GM10248 (cell line): ENCODE measurements at regions of chr19 and their contacts with region 1.

Region 1: GRCh38 chr19:2032296-2032941 is 16.9 kb upstream of the BTBD2 start:
- DNase-seq: no peak
- CTCF ChIP-seq: no peak

Region 2: GRCh38 chr19:2021453-2022140 is 10.8 kb before region 1 on chr19:
- CTCF ChIA-PET with region 1: interaction called, 33 read pairs
- POLR2A ChIA-PET with region 1: interaction called, 6 read pairs
- DNase-seq: no peak
- CTCF ChIP-seq: no peak

Region 3: DNA sequence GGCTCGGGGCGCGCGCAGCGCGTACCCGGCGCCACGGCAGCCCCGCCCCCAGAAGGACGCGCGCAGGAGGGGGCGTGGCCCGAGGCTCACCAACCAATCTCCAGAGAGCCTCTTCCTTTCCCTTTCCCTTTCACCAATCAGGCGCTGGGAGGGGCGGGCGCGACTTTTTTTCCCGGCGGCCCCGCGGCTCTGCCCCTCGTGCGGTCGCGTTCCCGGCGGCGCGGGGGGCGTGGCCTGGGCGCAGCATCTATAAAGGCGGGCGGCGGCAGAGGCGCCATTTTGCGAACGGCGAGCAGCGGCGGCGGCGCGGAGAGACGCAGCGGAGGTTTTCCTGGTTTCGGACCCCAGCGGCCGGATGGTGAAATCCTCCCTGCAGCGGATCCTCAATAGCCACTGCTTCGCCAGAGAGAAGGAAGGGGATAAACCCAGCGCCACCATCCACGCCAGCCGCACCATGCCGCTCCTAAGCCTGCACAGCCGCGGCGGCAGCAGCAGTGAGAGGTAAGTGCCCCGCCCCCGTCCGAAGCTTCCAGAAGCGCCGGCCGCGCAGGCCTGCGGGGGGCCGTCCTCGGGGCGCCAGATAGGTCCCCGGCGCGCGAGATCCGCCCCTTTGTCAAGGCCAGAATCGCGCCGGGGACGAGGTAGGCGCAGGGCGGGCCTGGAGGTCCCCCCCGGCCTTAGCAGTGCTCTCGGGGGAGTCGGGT is 237.0 kb after region 1 on chr19:
- CTCF ChIA-PET with region 1: no interaction called
- POLR2A ChIA-PET with region 1: no interaction called
- DNase-seq: peak; percentile 100
- CTCF ChIP-seq: no peak